ENCODE measurements at regions of chr2 and their contacts with region 1.

Region 1: DNA sequence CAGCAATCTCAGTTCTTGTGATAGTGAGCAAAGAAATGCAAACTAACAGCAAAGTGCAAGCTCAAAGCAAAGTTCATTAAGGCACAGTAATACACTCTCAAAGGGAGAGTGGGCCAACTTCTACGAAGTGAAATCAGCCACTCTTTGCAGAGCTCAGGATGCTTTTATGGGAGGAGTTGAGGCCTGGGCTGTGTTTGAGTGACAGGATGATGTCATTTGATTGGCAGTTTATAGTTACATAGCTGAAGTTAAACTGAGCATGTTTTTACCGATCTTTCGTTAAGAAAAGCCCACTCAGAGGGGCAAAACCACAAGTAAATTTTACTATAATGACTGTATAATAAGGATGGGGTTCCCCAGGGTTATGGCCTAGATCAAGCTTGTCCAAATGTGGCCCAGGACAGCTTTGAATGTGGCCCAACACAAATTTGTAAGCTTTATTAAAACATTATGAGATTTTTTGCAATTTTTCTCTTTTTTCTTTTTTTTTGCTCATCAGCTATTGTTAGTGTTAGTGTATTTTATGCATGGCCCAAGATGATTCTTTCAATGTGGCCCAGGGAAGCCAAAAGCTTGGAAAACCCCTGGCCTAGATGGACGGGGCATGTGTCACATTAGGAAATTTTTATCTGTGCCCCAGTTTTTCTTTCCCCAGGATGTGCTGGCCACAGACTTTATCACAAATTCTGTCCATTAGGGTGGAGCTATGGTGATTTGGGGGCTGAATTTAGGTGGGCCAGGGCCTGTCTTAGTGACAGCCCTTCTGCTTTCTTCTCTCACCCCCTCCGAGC is 8.3 kb upstream of the DNAH7 start:
- DNase-seq: no peak
- ATAC-seq: no peak
- H3K4me3 ChIP-seq: no peak overlapping the region
- H3K4me3 Mint-ChIP-seq: no peak overlapping the region
- H3K27ac ChIP-seq: no peak overlapping the region
- H3K27ac Mint-ChIP-seq: no peak overlapping the region
- H3K4me1 ChIP-seq: peaks cover 13 to 17% of the 10 kb centered on the region in 2 donors
- H3K4me1 Mint-ChIP-seq: peaks cover 21% of the 10 kb centered on the region
- H3K27me3 ChIP-seq: no peaks in the 10 kb centered on the region
- H3K27me3 Mint-ChIP-seq: no peaks in the 10 kb centered on the region
- CTCF ChIP-seq: no peak

Region 2: GRCh38 chr2:196041786-196042185 is 35.2 kb before region 1 on chr2:
- CTCF ChIA-PET with region 1: no interaction called
- POLR2A ChIA-PET with region 1: no interaction called
- intact Hi-C with region 1: no loop called
- DNase-seq: no peak
- ATAC-seq: no peak
- H3K4me3 ChIP-seq: no peak overlapping the region
- H3K4me3 Mint-ChIP-seq: no peak overlapping the region
- H3K27ac ChIP-seq: no peak overlapping the region
- H3K27ac Mint-ChIP-seq: no peak overlapping the region
- H3K4me1 ChIP-seq: peaks cover 2 to 6% of the 10 kb centered on the region in 2 donors
- H3K4me1 Mint-ChIP-seq: peaks cover 10% of the 10 kb centered on the region
- H3K27me3 ChIP-seq: no peaks in the 10 kb centered on the region
- H3K27me3 Mint-ChIP-seq: peaks cover 18% of the 10 kb centered on the region
- CTCF ChIP-seq: no peak

Region 3: GRCh38 chr2:196131384-196131937 is 54.5 kb after region 1 on chr2:
- CTCF ChIA-PET with region 1: interaction called, 13 read pairs
- POLR2A ChIA-PET with region 1: no interaction called
- intact Hi-C with region 1: no loop called
- DNase-seq: peak; percentile 63
- ATAC-seq: peak; percentile 41
- H3K4me3 ChIP-seq: no peak overlapping the region
- H3K4me3 Mint-ChIP-seq: no peak overlapping the region
- H3K27ac ChIP-seq: no peak overlapping the region
- H3K27ac Mint-ChIP-seq: peak overlapping the region; percentile 53
- H3K4me1 ChIP-seq: no peaks in the 10 kb centered on the region
- H3K4me1 Mint-ChIP-seq: no peaks in the 10 kb centered on the region
- H3K27me3 ChIP-seq: no peaks in the 10 kb centered on the region
- H3K27me3 Mint-ChIP-seq: no peaks in the 10 kb centered on the region
- CTCF ChIP-seq: peak; percentile 34

Region 4: DNA sequence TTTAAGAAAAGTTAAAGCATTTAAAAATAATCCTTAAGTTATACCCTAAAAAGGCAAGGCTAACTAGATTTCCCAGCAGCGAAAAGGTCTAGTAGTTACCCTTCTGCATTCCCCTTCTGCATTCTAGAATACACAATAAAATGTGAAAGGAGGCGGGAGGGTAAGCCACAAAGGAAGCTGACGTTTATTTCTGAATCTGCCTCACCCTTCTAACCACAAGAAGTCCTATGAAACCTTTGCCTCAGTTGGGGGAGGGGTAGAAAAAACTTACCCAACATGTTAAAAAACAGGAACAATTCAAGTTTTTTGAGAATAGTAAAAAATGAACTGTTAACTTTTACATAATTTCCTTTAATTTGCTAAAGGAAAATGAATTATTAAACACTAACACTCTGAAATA is 83.1 kb after region 1 on chr2:
- CTCF ChIA-PET with region 1: interaction called, 11 read pairs
- POLR2A ChIA-PET with region 1: no interaction called
- intact Hi-C with region 1: no loop called
- DNase-seq: peak; percentile 92
- ATAC-seq: peak; percentile 82
- H3K4me3 ChIP-seq: peak overlapping the region in 3 of 5 experiments; percentile 8 to 65 (median 13)
- H3K4me3 Mint-ChIP-seq: peak overlapping the region; percentile 56
- H3K27ac ChIP-seq: peak overlapping the region; percentile 47 to 96
- H3K27ac Mint-ChIP-seq: peak overlapping the region; percentile 82
- H3K4me1 ChIP-seq: peaks cover 56 to 93% of the 10 kb centered on the region in 2 donors
- H3K4me1 Mint-ChIP-seq: peaks cover 66% of the 10 kb centered on the region
- H3K27me3 ChIP-seq: no peaks in the 10 kb centered on the region
- H3K27me3 Mint-ChIP-seq: no peaks in the 10 kb centered on the region
- CTCF ChIP-seq: no peak

Region 5: DNA sequence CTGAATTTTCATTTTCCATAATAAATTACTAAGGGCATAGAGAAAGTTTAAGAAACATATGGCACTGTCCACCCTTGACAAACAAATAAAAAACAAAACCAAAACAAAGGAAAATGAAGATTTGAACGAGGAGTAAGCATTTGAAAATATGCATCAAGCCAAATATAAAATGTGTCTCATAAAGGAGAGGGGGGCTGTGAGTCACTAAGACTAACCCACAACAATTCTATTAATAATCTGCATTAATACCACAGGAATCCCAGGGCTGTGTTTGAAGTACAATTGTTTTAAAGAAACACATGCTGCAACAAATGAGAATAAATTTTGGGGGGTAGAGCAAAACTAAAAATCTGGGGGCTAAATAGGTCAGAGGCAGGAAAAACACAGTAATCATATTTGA is 148.2 kb after region 1 on chr2:
- CTCF ChIA-PET with region 1: interaction called, 22 read pairs
- POLR2A ChIA-PET with region 1: no interaction called
- intact Hi-C with region 1: loop called (anchors 5 kb)
- DNase-seq: no peak
- ATAC-seq: no peak
- H3K4me3 ChIP-seq: no peak overlapping the region
- H3K4me3 Mint-ChIP-seq: no peak overlapping the region
- H3K27ac ChIP-seq: no peak overlapping the region
- H3K27ac Mint-ChIP-seq: no peak overlapping the region
- H3K4me1 ChIP-seq: peaks cover 25 to 28% of the 10 kb centered on the region in 2 donors
- H3K4me1 Mint-ChIP-seq: peaks cover 66% of the 10 kb centered on the region
- H3K27me3 ChIP-seq: no peaks in the 10 kb centered on the region
- H3K27me3 Mint-ChIP-seq: no peaks in the 10 kb centered on the region
- CTCF ChIP-seq: no peak

Region 6: DNA sequence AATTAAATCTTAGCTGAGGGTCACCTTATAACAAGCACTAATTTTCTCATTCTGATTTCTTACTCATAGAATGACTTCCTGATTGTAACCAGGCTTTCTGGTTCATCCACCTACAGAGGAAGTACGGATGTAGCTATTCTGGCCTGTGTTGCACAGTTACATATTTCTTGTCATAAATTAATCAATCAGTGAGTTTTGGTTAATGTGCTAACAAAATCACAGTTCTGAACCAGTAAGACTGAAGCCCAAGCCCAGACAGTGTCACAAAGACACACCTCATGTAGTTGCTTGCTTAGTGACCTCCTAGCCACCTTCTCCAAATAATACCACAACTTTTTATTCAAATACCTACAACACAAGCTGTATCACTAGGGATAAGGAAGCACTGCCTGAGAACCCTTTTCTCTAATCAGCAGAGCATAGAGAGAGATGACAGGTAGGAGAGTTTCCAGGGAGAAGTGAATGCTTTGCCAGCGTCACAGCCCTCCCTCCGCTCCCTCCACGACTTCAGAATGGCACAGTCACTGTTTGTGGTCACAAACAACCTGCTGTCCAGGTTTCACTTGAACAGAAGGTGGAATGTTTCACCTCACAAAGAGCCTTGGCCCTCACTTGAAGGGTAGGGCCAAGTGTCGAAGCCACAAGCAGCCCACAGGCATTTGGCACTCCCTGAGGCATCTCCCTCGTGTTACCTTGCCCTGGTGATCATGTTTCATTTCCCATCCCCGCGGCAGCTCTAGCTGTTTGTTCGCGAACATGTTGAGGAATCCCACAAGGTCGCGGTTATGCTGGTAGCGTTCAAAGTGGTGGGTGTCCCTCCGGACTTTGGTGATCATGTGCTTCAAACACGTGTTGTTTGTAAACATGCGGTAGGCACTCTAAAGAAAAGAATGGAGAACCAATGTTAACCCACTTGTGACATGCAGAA is 215.2 kb after region 1 on chr2:
- CTCF ChIA-PET with region 1: interaction called, 56 read pairs
- POLR2A ChIA-PET with region 1: no interaction called
- intact Hi-C with region 1: loop called (anchors 5 kb)
- DNase-seq: peak; percentile 43
- ATAC-seq: peak; percentile 56
- H3K4me3 ChIP-seq: no peak overlapping the region
- H3K4me3 Mint-ChIP-seq: peak overlapping the region; percentile 74
- H3K27ac ChIP-seq: peak overlapping the region; percentile 28 to 55
- H3K27ac Mint-ChIP-seq: peak overlapping the region; percentile 86
- H3K4me1 ChIP-seq: peaks cover 47 to 51% of the 10 kb centered on the region in 2 donors
- H3K4me1 Mint-ChIP-seq: peaks cover 53% of the 10 kb centered on the region
- H3K27me3 ChIP-seq: no peaks in the 10 kb centered on the region
- H3K27me3 Mint-ChIP-seq: no peaks in the 10 kb centered on the region
- CTCF ChIP-seq: no peak

Region 7: GRCh38 chr2:196337208-196337953 is 260.4 kb after region 1 on chr2:
- CTCF ChIA-PET with region 1: interaction called, 199 read pairs
- POLR2A ChIA-PET with region 1: interaction called, 3 read pairs
- intact Hi-C with region 1: loop called (anchors 1 kb)
- DNase-seq: peak; percentile 58
- ATAC-seq: peak; percentile 51
- H3K4me3 ChIP-seq: no peak overlapping the region
- H3K4me3 Mint-ChIP-seq: no peak overlapping the region
- H3K27ac ChIP-seq: peak overlapping the region in 1 of 2 donors; percentile 52
- H3K27ac Mint-ChIP-seq: peak overlapping the region; percentile 43
- H3K4me1 ChIP-seq: peaks cover 10 to 11% of the 10 kb centered on the region in 2 donors
- H3K4me1 Mint-ChIP-seq: peaks cover 19% of the 10 kb centered on the region
- H3K27me3 ChIP-seq: no peaks in the 10 kb centered on the region
- H3K27me3 Mint-ChIP-seq: no peaks in the 10 kb centered on the region
- CTCF ChIP-seq: peak; percentile 66

Measured in B cell (primary cell).